AG04449 (cell line): ENCODE measurements at regions of chr1 and their contacts with region 1.

Region 1: GRCh38 chr1:47432071-47433036 is 5.5 kb upstream of the FOXD2 start:
- DNase-seq: no peak
- H3K4me3 ChIP-seq: peak overlapping the region; percentile 33
- CTCF ChIP-seq: peak; percentile 87

Region 2: GRCh38 chr1:47416319-47417169 is 15.8 kb before region 1 on chr1:
- CTCF ChIA-PET with region 1: interaction called, 87 read pairs
- POLR2A ChIA-PET with region 1: no interaction called
- DNase-seq: no peak
- H3K4me3 ChIP-seq: peak overlapping the region; percentile 39
- CTCF ChIP-seq: no peak